OCI-LY7 (cell line): ENCODE measurements at regions of chr6 and their contacts with region 1.

Region 1: DNA sequence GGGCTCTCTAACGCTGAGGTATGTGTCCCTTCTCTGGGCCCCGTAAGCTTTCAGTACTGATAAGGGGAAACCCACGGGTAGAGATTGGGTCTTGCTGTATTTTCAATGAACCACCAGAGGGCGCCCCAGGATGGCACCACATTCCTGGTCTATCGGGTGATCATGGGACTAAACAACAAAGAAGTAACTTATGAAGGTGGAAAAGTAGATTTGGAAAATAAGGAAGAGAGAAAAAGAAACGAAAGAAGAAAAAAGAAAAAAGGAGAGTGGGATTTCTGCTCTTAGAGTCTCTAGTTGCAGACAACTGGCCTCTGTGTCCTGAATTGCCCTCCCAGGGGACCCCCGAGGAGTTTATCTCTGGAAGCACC is 93.8 kb downstream of the GMPR start:
- DNase-seq: peak; percentile 68
- H3K4me3 ChIP-seq: no peak overlapping the region
- H3K27ac ChIP-seq: no peak overlapping the region
- H3K4me1 ChIP-seq: peaks cover 5% of the 10 kb centered on the region
- CTCF ChIP-seq: peak; percentile 95

Region 2: GRCh38 chr6:16409531-16410441 is 77.6 kb after region 1 on chr6:
- CTCF ChIA-PET with region 1: interaction called, 4 read pairs
- POLR2A ChIA-PET with region 1: interaction called, 3 read pairs
- intact Hi-C with region 1: loop called (anchors 2 kb)
- DNase-seq: peak; percentile 65
- H3K4me3 ChIP-seq: no peak overlapping the region
- H3K27ac ChIP-seq: no peak overlapping the region
- H3K4me1 ChIP-seq: peaks cover 22% of the 10 kb centered on the region
- CTCF ChIP-seq: peak; percentile 92

Region 3: DNA sequence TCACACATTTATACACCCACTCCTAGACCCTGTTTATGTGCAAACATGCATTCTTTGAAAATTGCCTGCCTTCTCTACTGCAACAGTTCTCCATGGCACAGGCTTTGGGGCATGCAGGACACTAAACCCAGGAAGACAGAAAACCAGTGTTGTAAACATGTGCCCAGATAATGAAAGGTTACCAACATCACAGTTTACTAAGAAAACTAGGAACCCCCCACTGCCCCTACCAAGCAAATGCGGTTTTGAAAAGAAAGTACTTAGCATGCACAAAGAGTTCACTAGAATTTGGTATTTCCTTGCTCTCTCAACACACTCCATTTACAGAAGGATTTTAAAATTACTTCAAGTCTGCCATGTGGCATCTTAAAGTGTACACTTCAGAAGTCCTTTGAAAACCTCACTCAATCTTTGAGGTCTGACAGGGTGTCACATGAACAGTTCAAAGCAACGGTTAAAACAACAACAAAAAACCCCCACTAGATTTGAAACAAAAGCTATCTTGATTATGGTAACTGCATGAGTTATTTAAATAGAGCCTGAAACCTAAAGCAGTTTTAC is 151.2 kb after region 1 on chr6:
- CTCF ChIA-PET with region 1: no interaction called
- POLR2A ChIA-PET with region 1: no interaction called
- intact Hi-C with region 1: no loop called
- DNase-seq: no peak
- H3K4me3 ChIP-seq: no peak overlapping the region
- H3K27ac ChIP-seq: no peak overlapping the region
- H3K4me1 ChIP-seq: no peaks in the 10 kb centered on the region
- CTCF ChIP-seq: no peak

Region 4: GRCh38 chr6:16514249-16514648 is 182.1 kb after region 1 on chr6:
- CTCF ChIA-PET with region 1: interaction called, 3 read pairs
- POLR2A ChIA-PET with region 1: no interaction called
- intact Hi-C with region 1: loop called (anchors 2 kb)
- DNase-seq: no peak
- H3K4me3 ChIP-seq: no peak overlapping the region
- H3K27ac ChIP-seq: no peak overlapping the region
- H3K4me1 ChIP-seq: no peaks in the 10 kb centered on the region
- CTCF ChIP-seq: peak; percentile 56

Region 5: GRCh38 chr6:16712931-16713484 is 380.8 kb after region 1 on chr6:
- CTCF ChIA-PET with region 1: no interaction called
- POLR2A ChIA-PET with region 1: no interaction called
- intact Hi-C with region 1: loop called (anchors 2 kb)
- DNase-seq: no peak
- H3K4me3 ChIP-seq: no peak overlapping the region
- H3K27ac ChIP-seq: no peak overlapping the region
- H3K4me1 ChIP-seq: no peaks in the 10 kb centered on the region
- CTCF ChIP-seq: peak; percentile 42; the same call in 1 of the 2 replicates

Region 6: GRCh38 chr6:16761471-16762267 is 429.5 kb after region 1 on chr6:
- CTCF ChIA-PET with region 1: no interaction called
- POLR2A ChIA-PET with region 1: no interaction called
- intact Hi-C with region 1: loop called (anchors 2 kb)
- DNase-seq: no peak
- H3K4me3 ChIP-seq: no peak overlapping the region
- H3K27ac ChIP-seq: no peak overlapping the region
- H3K4me1 ChIP-seq: no peaks in the 10 kb centered on the region
- CTCF ChIP-seq: no peak

Region 7: DNA sequence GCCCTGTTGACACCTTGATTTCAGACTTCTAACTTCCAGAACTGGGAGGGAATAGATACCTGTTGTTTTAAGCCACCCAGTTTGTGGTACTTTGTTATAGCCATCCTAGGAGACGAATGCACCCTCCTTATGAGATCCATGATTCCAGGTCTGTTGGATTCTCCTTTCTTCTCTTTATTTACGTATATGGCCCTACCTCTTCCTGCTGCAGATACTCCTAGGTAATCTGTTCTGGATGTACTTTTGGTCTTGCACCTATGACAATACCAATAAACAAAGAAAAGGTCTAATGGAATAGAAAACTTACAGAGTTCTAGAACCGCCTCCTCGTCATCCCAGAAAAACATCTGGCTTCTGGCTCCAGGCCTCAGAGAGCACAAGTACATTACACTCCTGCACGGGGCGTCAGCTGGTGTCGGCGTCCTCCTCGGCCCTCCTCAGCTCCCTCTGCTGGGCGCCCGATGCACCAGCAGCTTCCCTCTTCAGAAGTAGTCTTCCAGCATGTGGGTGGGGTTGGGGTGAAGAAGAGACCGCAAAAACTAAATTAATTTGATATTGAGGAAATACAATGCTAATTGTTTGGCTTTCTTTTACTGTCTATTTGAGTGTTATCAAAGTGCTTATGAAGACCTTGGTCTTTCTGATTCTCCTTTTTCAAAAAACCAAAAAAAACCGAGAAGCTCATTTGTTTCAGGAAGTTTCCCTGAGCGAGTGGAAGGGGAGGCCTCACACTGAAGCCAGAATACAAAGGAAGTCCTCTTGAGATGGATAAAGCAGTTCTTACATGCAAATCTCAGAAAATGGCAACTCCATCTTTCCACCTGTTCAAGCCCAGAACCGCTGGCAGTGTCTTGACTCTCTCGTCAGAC is 438.8 kb after region 1 on chr6:
- CTCF ChIA-PET with region 1: no interaction called
- POLR2A ChIA-PET with region 1: no interaction called
- intact Hi-C with region 1: loop called (anchors 1 kb)
- DNase-seq: peak; percentile 52
- H3K4me3 ChIP-seq: no peak overlapping the region
- H3K27ac ChIP-seq: no peak overlapping the region
- H3K4me1 ChIP-seq: no peaks in the 10 kb centered on the region
- CTCF ChIP-seq: peak; percentile 86

Region 8: GRCh38 chr6:16964553-16965501 is 632.7 kb after region 1 on chr6:
- CTCF ChIA-PET with region 1: no interaction called
- POLR2A ChIA-PET with region 1: no interaction called
- intact Hi-C with region 1: loop called (anchors 2 kb)
- DNase-seq: peak; percentile 31
- H3K4me3 ChIP-seq: no peak overlapping the region
- H3K27ac ChIP-seq: no peak overlapping the region
- H3K4me1 ChIP-seq: no peaks in the 10 kb centered on the region
- CTCF ChIP-seq: peak; percentile 80